Caco-2 (cell line): ENCODE measurements at regions of chr17 and their contacts with region 1.

Region 1: GRCh38 chr17:4199818-4200402 is 56.9 kb downstream of the CYB5D2 start:
- DNase-seq: peak in 1 of 2 experiments; percentile 28
- H3K4me3 ChIP-seq: no peak overlapping the region
- H3K4me3 Mint-ChIP-seq: no peak overlapping the region
- H3K27ac Mint-ChIP-seq: no peak overlapping the region
- H3K4me1 ChIP-seq: no peaks in the 10 kb centered on the region
- H3K4me1 Mint-ChIP-seq: no peaks in the 10 kb centered on the region
- H3K27me3 ChIP-seq: no peaks in the 10 kb centered on the region
- H3K27me3 Mint-ChIP-seq: no peaks in the 10 kb centered on the region
- CTCF ChIP-seq: peak; percentile 56 to 59

Region 2: DNA sequence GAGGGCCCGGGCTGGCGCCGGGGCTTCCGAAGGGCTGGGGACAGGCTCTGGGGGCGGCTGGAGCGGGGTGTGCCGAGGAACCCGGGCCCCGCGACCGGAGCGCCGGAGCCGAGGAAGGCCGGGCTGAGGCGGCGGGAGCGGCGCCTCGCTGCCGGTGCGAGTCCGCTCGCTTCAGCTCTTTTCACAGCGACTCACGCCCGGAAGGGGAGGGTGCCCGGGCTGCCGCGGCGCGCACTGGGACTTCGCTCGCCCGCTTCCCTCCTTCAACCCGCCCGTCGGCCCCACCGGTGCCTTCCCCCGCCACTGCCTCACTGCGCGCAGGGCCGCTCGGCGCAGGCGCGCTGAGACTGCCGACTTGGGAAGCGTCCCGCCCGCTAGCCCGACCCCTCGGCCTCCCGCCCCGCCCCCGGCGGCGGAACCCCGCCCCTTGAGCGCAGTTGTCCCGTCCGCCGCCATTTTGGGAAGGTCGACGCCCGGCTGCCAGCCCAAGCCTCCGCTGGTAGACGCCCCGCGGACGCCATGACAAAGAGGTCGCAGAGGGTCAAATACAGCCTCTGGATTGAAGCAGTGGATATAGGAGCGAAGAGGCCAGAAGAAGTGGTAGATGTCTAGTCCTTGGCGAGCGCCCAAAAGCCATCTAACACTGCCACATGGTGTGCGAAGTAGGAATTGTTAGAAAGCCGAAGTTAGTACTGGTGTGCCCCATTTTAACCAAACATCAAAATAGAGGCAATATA is 166.6 kb after region 1 on chr17 and contains the start of gene UBE2G1:
- CTCF ChIA-PET with region 1: interaction called, 4 read pairs
- POLR2A ChIA-PET with region 1: no interaction called
- intact Hi-C with region 1: loop called (anchors 1 kb)
- DNase-seq: peak; percentile 95
- H3K4me3 ChIP-seq: peak within 1 kb of the TSS; percentile 67
- H3K4me3 Mint-ChIP-seq: peak within 1 kb of the TSS; percentile 71
- H3K27ac Mint-ChIP-seq: peak within 1 kb of the TSS; percentile 75
- H3K4me1 ChIP-seq: no peaks in the 10 kb centered on the region
- H3K4me1 Mint-ChIP-seq: peaks cover 6% of the 10 kb centered on the region
- H3K27me3 ChIP-seq: no peaks in the 10 kb centered on the region
- H3K27me3 Mint-ChIP-seq: no peaks in the 10 kb centered on the region
- CTCF ChIP-seq: peak in 1 of 2 experiments; percentile 36
- total RNA-seq, gene UBE2G1: 50.5 and 56.8 TPM in 2 replicates

Region 3: DNA sequence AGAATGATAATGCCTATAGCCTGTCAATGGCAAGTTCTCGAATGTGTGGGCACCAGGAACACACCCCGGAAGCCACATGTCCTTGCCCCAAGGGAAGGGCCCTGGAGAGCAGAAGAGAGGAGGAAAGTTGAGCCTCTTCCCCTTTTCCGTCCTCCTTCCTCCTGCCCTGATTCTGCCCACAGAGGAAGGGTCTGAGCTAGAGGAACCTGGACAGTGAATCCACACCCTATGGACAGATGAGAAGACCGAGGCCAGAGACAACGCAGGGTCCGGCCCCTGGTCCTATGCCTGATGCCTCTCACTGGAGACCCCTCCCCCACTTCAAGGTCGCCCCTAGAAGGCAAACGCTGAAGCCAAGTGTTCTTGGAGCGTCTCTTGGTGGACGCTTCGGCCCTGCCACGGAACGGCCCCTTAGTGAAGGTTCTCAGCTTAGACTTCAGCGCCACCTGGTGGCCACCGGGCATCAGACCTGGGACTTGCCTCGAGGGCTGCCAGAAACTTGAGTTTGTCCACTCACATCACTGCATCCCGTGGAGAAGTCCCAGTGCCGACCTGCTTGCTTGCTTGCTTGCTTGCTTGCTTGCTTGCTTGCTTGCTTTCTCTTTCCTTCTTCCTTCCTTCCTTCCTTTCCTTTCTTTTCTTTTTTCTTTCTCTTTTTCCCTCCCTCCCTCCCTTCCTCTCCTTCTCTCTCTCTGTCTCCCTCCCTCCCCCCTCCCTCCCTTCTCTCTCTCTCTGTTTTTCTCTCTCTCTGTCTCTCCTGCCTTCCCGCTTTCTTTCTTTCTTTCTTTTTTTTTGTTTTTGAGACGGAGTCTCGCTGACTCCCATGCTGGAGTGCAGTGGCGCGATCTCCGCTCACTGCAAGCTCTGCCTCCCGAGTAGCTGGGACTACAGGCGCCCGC is 213.3 kb after region 1 on chr17:
- CTCF ChIA-PET with region 1: interaction called, 9 read pairs
- POLR2A ChIA-PET with region 1: no interaction called
- intact Hi-C with region 1: loop called (anchors 2 kb)
- DNase-seq: peak; percentile 76 to 83
- H3K4me3 ChIP-seq: no peak overlapping the region
- H3K4me3 Mint-ChIP-seq: no peak overlapping the region
- H3K27ac Mint-ChIP-seq: no peak overlapping the region
- H3K4me1 ChIP-seq: no peaks in the 10 kb centered on the region
- H3K4me1 Mint-ChIP-seq: no peaks in the 10 kb centered on the region
- H3K27me3 ChIP-seq: no peaks in the 10 kb centered on the region
- H3K27me3 Mint-ChIP-seq: no peaks in the 10 kb centered on the region
- CTCF ChIP-seq: peak; percentile 48 to 77